ENCODE measurements at regions of chr11 and their contacts with region 1.

Region 1: GRCh38 chr11:57644748-57645688 is 4.7 kb downstream of the YPEL4 start:
- DNase-seq: peak; percentile 92
- H3K4me3 ChIP-seq: no peak overlapping the region
- H3K27ac ChIP-seq: no peak overlapping the region
- H3K4me1 ChIP-seq: no peaks in the 10 kb centered on the region
- H3K27me3 ChIP-seq: peaks cover 36% of the 10 kb centered on the region
- CTCF ChIP-seq: peak; percentile 84

Region 2: GRCh38 chr11:57345555-57346211 is 299.3 kb before region 1 on chr11:
- intact Hi-C with region 1: loop called (anchors 5 kb)
- DNase-seq: peak; percentile 86
- H3K4me3 ChIP-seq: no peak overlapping the region
- H3K27ac ChIP-seq: no peak overlapping the region
- H3K4me1 ChIP-seq: no peaks in the 10 kb centered on the region
- H3K27me3 ChIP-seq: no peaks in the 10 kb centered on the region
- CTCF ChIP-seq: peak; percentile 80

Region 3: DNA sequence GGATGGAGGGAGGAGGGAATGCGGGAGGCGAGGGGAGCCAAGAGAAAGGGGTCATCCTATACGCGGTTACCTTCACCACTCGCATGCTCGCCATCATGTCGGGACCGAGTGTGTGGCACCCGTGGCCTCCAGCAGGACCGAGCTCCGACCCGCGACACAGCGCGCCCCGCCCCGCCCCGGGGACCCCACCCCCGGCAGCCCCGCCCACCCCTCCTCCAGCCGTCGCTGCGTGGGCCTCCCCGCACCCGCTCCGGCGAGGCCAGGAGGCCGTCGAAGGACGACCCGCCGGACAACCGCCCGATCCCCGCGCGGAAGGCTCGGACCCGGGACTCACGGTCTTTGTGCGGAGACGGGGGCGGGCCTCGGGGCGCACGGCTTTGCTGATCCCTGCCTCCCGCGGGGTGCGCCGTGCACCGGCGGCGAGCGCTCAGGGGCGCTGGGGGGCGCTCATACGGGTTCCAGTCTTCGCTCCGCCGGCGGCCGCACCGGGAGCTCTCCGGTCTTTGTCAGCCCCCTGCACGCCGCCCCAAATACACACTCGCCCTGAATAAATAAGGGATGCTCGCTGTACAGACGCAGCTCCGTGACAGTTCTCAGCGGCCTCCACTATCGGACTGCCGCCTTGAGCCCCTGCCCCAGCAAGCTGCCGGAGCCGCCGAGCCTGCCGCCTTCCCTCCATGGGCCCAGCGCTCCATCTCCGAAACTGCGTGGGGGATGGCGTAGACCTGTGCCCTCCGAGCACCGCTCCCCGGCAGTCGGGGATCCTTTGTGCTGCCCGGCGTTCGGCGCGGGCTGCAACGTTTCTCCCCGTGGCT is 77.3 kb before region 1 on chr11 and contains the start of gene UBE2L6:
- intact Hi-C with region 1: loop called (anchors 2 kb)
- DNase-seq: peak; percentile 74
- H3K4me3 ChIP-seq: peak within 1 kb of the TSS; percentile 84
- H3K27ac ChIP-seq: peak within 1 kb of the TSS; percentile 84
- H3K4me1 ChIP-seq: no peaks in the 10 kb centered on the region
- H3K27me3 ChIP-seq: no peaks in the 10 kb centered on the region
- CTCF ChIP-seq: no peak
- total RNA-seq, gene UBE2L6: 28.3 to 35.3 TPM